Activated naive CD4-positive, alpha-beta T cell treated with anti-CD3 and anti-CD28 coated beads, Interleukin-2, amount 10 ng/mL, durations not matched to agents 7 days and 5 days (primary cell): ENCODE measurements at regions of chr10 and their contacts with region 1.

Region 1: GRCh38 chr10:72331601-72332422 is 22.9 kb downstream of the DNAJB12 start:
- DNase-seq: peak; percentile 94
- H3K4me3 Mint-ChIP-seq: peak overlapping the region; percentile 79
- H3K27ac Mint-ChIP-seq: peak overlapping the region; percentile 98
- H3K4me1 Mint-ChIP-seq: peaks cover 96% of the 10 kb centered on the region
- H3K27me3 Mint-ChIP-seq: no peaks in the 10 kb centered on the region

Region 2: DNA sequence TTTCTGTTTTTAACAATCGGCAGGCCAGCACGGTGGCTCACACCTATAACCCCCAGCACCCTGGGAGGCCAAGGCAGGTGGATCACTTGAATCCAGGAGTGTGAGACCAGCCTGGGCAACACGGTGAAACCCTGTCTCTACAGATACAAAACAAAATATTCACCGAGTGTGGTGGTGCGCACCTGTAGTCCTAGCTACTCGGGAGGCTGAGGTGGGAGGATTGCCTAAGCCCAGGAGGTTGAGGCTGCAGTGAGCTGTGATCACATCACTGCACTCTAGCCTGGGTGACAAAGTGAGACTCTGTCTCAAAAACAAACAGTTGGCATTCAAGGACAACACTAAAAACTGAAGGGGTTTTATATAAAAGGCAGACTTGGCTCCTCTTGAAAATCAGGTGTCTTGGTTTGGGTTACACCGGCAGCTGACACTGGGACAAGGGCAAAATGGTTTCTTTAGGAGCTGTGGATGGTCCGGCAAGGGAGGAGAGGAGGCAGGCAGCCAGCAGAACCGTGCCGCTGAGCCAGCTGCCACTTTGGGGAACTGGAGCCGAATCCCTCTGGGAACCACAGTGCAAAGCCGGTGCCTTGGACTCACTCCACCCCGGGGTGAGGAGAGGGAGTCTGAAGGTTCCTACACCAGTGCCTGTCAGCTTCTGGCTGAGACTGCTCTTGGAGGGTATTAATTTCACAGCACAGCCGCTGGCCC is 315.1 kb before region 1 on chr10:
- CTCF ChIA-PET with region 1: no interaction called
- DNase-seq: no peak
- H3K4me3 Mint-ChIP-seq: no peak overlapping the region
- H3K27ac Mint-ChIP-seq: no peak overlapping the region
- H3K4me1 Mint-ChIP-seq: peaks cover 5% of the 10 kb centered on the region
- H3K27me3 Mint-ChIP-seq: peaks cover 13% of the 10 kb centered on the region

Region 3: GRCh38 chr10:72133517-72133916 is 198.3 kb before region 1 on chr10:
- CTCF ChIA-PET with region 1: interaction called, 90 read pairs
- DNase-seq: no peak
- H3K4me3 Mint-ChIP-seq: no peak overlapping the region
- H3K27ac Mint-ChIP-seq: peak overlapping the region; percentile 1
- H3K4me1 Mint-ChIP-seq: peaks cover 48% of the 10 kb centered on the region
- H3K27me3 Mint-ChIP-seq: no peaks in the 10 kb centered on the region

Region 4: GRCh38 chr10:72223743-72224101 is 108.1 kb before region 1 on chr10:
- CTCF ChIA-PET with region 1: interaction called, 37 read pairs
- DNase-seq: no peak
- H3K4me3 Mint-ChIP-seq: no peak overlapping the region
- H3K27ac Mint-ChIP-seq: peak overlapping the region; percentile 56
- H3K4me1 Mint-ChIP-seq: peaks cover 52% of the 10 kb centered on the region
- H3K27me3 Mint-ChIP-seq: no peaks in the 10 kb centered on the region

Region 5: GRCh38 chr10:72260588-72261322 is 71.1 kb before region 1 on chr10:
- CTCF ChIA-PET with region 1: interaction called, 14 read pairs
- DNase-seq: peak; percentile 92
- H3K4me3 Mint-ChIP-seq: peak overlapping the region; percentile 73
- H3K27ac Mint-ChIP-seq: peak overlapping the region; percentile 97
- H3K4me1 Mint-ChIP-seq: peaks cover 77% of the 10 kb centered on the region
- H3K27me3 Mint-ChIP-seq: peaks cover 5% of the 10 kb centered on the region